Activated naive CD4-positive, alpha-beta T cell treated with anti-CD3 and anti-CD28 coated beads, Interleukin-2, amount 10 ng/mL, durations not matched to agents 7 days and 5 days (primary cell): ENCODE measurements at regions of chr12 and their contacts with region 1.

Region 1: DNA sequence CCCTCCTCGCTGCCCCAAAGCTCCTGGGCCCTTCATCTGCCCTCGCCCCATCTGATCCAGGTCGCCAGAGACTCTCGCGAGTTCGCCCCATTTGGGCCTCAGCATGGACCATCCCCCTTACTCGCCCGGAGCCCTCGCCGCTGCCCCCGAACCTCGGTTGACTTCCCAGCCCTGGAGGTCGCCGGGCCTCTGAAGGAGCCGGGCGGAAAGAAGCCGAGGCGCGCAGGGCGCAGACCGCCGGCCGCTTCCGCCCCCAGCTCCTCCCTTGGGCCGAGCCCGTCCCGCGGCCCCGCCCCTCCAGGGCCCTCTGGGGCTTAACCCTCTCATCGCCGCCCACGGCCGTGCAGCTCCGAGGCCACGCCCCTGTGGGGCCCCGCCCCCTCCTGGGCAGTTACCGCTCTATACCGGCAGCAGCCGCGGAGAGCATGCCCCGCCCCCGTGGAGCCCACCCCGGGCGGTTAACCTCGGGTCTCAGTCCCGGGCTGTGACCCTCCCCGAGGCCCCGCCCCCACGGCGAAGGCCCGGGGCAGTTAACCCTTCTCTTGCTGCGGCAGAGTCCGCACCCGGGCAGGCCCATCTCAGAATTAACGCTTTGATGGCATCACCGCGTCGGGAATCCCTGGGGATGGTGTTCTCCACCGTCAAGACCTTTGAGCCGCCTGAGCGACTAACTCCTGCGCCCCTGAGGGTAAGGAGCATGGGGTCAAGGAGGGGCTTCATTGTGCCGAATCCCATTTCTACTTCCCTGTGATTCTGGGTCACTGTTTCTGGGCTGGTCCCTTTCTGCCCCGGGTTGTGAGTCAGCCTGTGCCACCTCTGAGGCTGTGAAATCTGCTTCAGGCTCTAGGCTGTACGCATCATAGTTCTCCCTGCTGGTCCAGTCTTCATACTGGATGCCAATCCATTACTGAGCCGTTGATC is at the start of gene SPSB2:
- DNase-seq: peak; percentile 99
- H3K4me3 Mint-ChIP-seq: peak within 1 kb of the TSS; percentile 90
- H3K27ac Mint-ChIP-seq: peak within 1 kb of the TSS; percentile 93
- H3K4me1 Mint-ChIP-seq: peaks cover 57% of the 10 kb centered on the region
- H3K27me3 Mint-ChIP-seq: no peaks in the 10 kb centered on the region

Region 2: GRCh38 chr12:6851921-6852650 is 21.3 kb before region 1 on chr12 and contains the start of gene USP5:
- CTCF ChIA-PET with region 1: interaction called, 29 read pairs
- DNase-seq: peak; percentile 99
- H3K4me3 Mint-ChIP-seq: peak within 1 kb of the TSS; percentile 84
- H3K27ac Mint-ChIP-seq: peak within 1 kb of the TSS; percentile 100
- H3K4me1 Mint-ChIP-seq: peaks cover 55% of the 10 kb centered on the region
- H3K27me3 Mint-ChIP-seq: no peaks in the 10 kb centered on the region

Region 3: GRCh38 chr12:6890789-6891645 is 17.7 kb after region 1 on chr12:
- CTCF ChIA-PET with region 1: interaction called, 35 read pairs
- DNase-seq: peak; percentile 99
- H3K4me3 Mint-ChIP-seq: peak overlapping the region; percentile 76
- H3K27ac Mint-ChIP-seq: peak overlapping the region; percentile 94
- H3K4me1 Mint-ChIP-seq: peaks cover 29% of the 10 kb centered on the region
- H3K27me3 Mint-ChIP-seq: no peaks in the 10 kb centered on the region

Region 4: GRCh38 chr12:7162691-7163114 is 289.3 kb after region 1 on chr12:
- CTCF ChIA-PET with region 1: no interaction called
- DNase-seq: peak; percentile 51
- H3K4me3 Mint-ChIP-seq: no peak overlapping the region
- H3K27ac Mint-ChIP-seq: peak overlapping the region; percentile 6
- H3K4me1 Mint-ChIP-seq: peaks cover 8% of the 10 kb centered on the region
- H3K27me3 Mint-ChIP-seq: peaks cover 34% of the 10 kb centered on the region